Activated CD4-positive, alpha-beta memory T cell treated with anti-CD3 and anti-CD28 coated beads for 36 hours (primary cell): ENCODE measurements at regions of chr6 and their contacts with region 1.

Region 1: DNA sequence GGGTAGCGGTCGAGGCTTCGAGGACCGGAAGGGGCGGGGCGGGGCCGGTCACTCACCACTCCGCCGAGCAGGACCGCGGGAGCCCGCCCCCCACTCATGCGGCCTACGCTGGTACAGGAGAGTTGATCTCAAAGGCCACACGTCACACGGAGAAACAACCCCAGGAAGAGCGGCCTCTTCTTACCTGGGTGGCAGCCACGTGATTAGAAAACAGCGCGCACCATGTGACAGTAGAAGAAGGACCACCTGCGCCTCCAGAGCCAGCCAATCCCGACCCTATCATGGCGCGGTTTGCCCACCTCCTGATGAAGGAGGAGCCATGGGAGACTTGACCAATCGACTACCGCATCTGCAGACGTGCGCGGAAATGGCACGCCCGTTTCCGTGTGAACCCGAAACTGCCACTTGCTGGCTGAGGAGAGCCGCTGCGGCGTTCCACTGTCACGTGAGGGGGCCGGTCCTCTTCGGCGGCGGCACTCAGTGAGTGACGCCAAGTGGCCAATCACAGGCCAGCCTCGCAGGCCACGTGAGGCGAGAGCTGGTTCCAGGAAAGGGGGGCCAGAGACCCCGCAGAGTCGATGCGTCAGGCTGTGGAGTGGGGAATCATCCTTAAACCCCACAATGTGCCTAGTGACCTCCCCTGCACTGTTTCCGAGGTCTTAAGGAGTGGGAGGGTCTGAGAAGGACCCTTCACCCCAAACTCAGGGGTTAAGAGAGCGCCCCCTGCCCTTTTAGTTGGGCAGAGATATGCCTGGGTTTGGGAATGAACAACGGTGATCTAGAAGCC is at the start of gene CUTA:
- DNase-seq: peak; percentile 100
- H3K4me3 Mint-ChIP-seq: peak within 1 kb of the TSS; percentile 94
- H3K27ac Mint-ChIP-seq: peak within 1 kb of the TSS; percentile 99
- H3K4me1 Mint-ChIP-seq: peaks cover 56% of the 10 kb centered on the region
- H3K27me3 Mint-ChIP-seq: no peaks in the 10 kb centered on the region
- total RNA-seq, gene CUTA: 190 to 198 TPM

Region 2: DNA sequence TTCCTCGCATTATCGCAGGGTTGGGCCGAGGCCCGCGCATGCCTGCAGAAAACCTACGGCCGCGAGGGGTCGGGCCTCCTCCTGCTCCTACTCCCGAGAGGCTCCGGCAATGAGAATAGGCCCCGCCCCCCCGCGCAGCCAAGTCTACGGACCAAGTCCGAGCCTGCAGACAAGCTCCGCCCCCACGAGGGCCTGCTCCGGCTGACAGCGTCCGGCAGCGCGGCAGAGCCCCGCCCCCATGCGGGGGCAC is 1222.5 kb before region 1 on chr6:
- CTCF ChIA-PET with region 1: no interaction called
- POLR2A ChIA-PET with region 1: no interaction called
- intact Hi-C with region 1: loop called (anchors 10 kb)
- DNase-seq: peak; percentile 100
- H3K4me3 Mint-ChIP-seq: peak overlapping the region; percentile 96
- H3K27ac Mint-ChIP-seq: peak overlapping the region; percentile 98
- H3K4me1 Mint-ChIP-seq: peaks cover 23% of the 10 kb centered on the region
- H3K27me3 Mint-ChIP-seq: no peaks in the 10 kb centered on the region

Region 3: GRCh38 chr6:32843979-32844838 is 573.9 kb before region 1 on chr6 and contains the start of gene PSMB8:
- CTCF ChIA-PET with region 1: no interaction called
- POLR2A ChIA-PET with region 1: no interaction called
- intact Hi-C with region 1: loop called (anchors 5 kb)
- DNase-seq: peak; percentile 99
- H3K4me3 Mint-ChIP-seq: peak within 1 kb of the TSS; percentile 97
- H3K27ac Mint-ChIP-seq: peak within 1 kb of the TSS; percentile 100
- H3K4me1 Mint-ChIP-seq: peaks cover 63% of the 10 kb centered on the region
- H3K27me3 Mint-ChIP-seq: no peaks in the 10 kb centered on the region
- total RNA-seq, gene PSMB8: 350 to 370 TPM

Region 4: GRCh38 chr6:33299237-33299944 is 118.7 kb before region 1 on chr6:
- CTCF ChIA-PET with region 1: no interaction called
- POLR2A ChIA-PET with region 1: no interaction called
- intact Hi-C with region 1: loop called (anchors 2 kb)
- DNase-seq: peak; percentile 96
- H3K4me3 Mint-ChIP-seq: peak overlapping the region; percentile 89
- H3K27ac Mint-ChIP-seq: peak overlapping the region; percentile 96
- H3K4me1 Mint-ChIP-seq: peaks cover 30% of the 10 kb centered on the region
- H3K27me3 Mint-ChIP-seq: no peaks in the 10 kb centered on the region

Region 5: DNA sequence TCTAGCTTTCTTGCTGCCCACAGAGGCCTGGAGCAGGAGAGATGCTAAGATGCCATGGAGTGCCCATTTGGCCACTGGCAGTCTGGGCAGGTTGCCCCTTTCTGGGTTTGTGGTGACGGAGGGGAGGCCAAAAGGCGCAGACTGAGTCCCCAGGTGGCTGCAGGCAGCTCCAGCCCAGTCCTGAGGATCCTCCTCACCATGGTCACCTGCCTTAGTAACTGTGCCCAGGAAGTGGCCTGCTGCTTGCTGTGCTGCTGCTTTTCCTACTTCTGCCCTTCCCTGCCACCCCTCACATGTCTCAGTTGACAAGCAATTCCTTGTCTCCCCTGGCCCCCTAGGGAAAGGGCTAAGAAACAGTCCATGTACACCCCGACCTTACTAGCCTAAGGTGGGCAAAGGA is 61.8 kb before region 1 on chr6:
- CTCF ChIA-PET with region 1: no interaction called
- POLR2A ChIA-PET with region 1: no interaction called
- intact Hi-C with region 1: no loop called
- DNase-seq: no peak
- H3K4me3 Mint-ChIP-seq: no peak overlapping the region
- H3K27ac Mint-ChIP-seq: no peak overlapping the region
- H3K4me1 Mint-ChIP-seq: no peaks in the 10 kb centered on the region
- H3K27me3 Mint-ChIP-seq: no peaks in the 10 kb centered on the region

Region 6: GRCh38 chr6:33570806-33571636 is 152.9 kb after region 1 on chr6:
- CTCF ChIA-PET with region 1: no interaction called
- POLR2A ChIA-PET with region 1: interaction called, 3 read pairs
- intact Hi-C with region 1: loop called (anchors 2 kb)
- DNase-seq: peak; percentile 97
- H3K4me3 Mint-ChIP-seq: peak overlapping the region; percentile 82
- H3K27ac Mint-ChIP-seq: peak overlapping the region; percentile 99
- H3K4me1 Mint-ChIP-seq: peaks cover 41% of the 10 kb centered on the region
- H3K27me3 Mint-ChIP-seq: no peaks in the 10 kb centered on the region

Region 7: GRCh38 chr6:33579828-33580714 is 162.0 kb after region 1 on chr6 and contains the start of gene BAK1:
- CTCF ChIA-PET with region 1: interaction called, 4 read pairs
- POLR2A ChIA-PET with region 1: no interaction called
- intact Hi-C with region 1: loop called (anchors 2 kb)
- DNase-seq: peak; percentile 93
- H3K4me3 Mint-ChIP-seq: peak within 1 kb of the TSS; percentile 96
- H3K27ac Mint-ChIP-seq: peak within 1 kb of the TSS; percentile 98
- H3K4me1 Mint-ChIP-seq: peaks cover 33% of the 10 kb centered on the region
- H3K27me3 Mint-ChIP-seq: no peaks in the 10 kb centered on the region
- total RNA-seq, gene BAK1: 56.3 to 57.7 TPM

Region 8: DNA sequence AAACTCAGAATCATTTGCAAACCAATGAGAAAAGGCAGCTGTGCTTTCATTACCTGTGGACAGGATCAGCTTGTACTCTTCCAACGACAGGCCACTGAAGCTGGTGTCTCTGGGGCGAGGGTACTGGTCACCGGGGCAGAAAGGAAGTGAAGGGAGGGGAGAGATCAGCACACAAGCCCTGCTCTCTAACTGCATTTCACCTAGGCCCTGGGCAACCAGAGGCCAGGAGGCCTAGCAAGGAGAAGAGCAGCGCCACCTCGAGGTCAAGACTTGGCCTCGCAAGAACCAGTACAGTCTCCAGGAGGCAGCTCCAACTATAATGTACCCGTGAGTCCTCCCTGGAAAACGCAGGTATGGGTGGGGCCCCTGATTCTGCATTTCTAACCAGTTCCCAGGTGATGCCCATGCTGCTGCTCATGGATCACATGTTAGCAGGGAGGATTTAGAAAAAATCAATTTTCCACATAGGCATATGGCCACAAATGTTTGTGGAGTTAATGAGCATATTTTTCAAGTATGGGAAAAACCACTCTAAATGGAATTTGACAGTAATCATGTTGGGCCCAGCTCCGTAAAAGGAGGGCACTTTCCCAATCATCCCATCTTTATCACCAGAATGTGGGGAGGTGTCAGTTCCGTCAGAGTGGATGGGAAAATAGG is 282.4 kb after region 1 on chr6:
- CTCF ChIA-PET with region 1: no interaction called
- POLR2A ChIA-PET with region 1: no interaction called
- intact Hi-C with region 1: loop called (anchors 10 kb)
- DNase-seq: peak; percentile 84
- H3K4me3 Mint-ChIP-seq: no peak overlapping the region
- H3K27ac Mint-ChIP-seq: peak overlapping the region; percentile 73
- H3K4me1 Mint-ChIP-seq: peaks cover 37% of the 10 kb centered on the region
- H3K27me3 Mint-ChIP-seq: no peaks in the 10 kb centered on the region